B cell (primary cell): ENCODE measurements at regions of chr3 and their contacts with region 1.

Region 1: GRCh38 chr3:33645060-33645647 is 72.9 kb downstream of the CLASP2 start:
- DNase-seq: no peak
- ATAC-seq: no peak
- H3K4me3 ChIP-seq: no peak overlapping the region
- H3K4me3 Mint-ChIP-seq: no peak overlapping the region
- H3K27ac ChIP-seq: no peak overlapping the region
- H3K27ac Mint-ChIP-seq: no peak overlapping the region
- H3K4me1 ChIP-seq: no peaks in the 10 kb centered on the region
- H3K4me1 Mint-ChIP-seq: peaks cover 14% of the 10 kb centered on the region
- H3K27me3 ChIP-seq: no peaks in the 10 kb centered on the region
- H3K27me3 Mint-ChIP-seq: no peaks in the 10 kb centered on the region
- CTCF ChIP-seq: no peak

Region 2: DNA sequence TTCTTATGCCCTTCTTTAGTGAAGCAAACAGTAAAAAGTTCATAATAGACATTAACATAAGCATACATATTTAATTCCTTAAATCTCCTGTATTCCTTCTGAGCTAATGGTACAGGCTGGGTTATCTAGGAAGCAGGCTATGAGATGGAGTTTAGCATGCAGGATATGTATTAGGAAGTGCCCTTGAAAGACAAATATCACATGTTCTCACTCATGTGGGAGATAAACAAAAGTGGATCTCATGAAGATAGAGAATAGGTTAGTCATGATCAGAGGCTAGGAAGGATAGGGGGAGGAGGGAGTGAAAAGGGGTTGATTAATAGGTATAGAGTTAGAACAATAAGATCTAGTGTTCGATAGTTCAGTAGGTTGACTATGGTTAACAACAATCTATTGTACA is 32.5 kb before region 1 on chr3:
- CTCF ChIA-PET with region 1: no interaction called
- POLR2A ChIA-PET with region 1: no interaction called
- intact Hi-C with region 1: no loop called
- DNase-seq: no peak
- ATAC-seq: no peak
- H3K4me3 ChIP-seq: no peak overlapping the region
- H3K4me3 Mint-ChIP-seq: no peak overlapping the region
- H3K27ac ChIP-seq: no peak overlapping the region
- H3K27ac Mint-ChIP-seq: no peak overlapping the region
- H3K4me1 ChIP-seq: no peaks in the 10 kb centered on the region
- H3K4me1 Mint-ChIP-seq: no peaks in the 10 kb centered on the region
- H3K27me3 ChIP-seq: no peaks in the 10 kb centered on the region
- H3K27me3 Mint-ChIP-seq: no peaks in the 10 kb centered on the region
- CTCF ChIP-seq: no peak

Region 3: DNA sequence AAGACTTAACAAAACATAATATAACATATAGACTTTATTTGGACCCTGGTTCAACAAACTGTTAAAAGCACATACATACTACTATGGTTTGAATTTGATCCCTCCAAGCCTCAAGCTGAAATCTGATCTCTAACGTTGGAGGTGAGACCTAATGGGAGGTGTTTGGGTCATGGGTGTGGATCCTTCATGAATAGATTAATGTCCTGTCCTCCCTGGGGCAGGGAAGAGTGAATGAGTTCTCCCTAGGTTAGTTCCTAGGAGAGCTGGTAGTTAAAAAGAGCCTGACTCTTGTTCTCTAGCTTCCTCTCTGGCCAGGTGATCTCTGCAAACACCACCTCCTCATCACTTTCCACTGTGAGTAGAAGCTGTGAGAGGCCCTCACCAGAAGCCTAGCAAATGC is 36.5 kb after region 1 on chr3:
- CTCF ChIA-PET with region 1: no interaction called
- POLR2A ChIA-PET with region 1: no interaction called
- intact Hi-C with region 1: loop called (anchors 5 kb)
- DNase-seq: no peak
- ATAC-seq: no peak
- H3K4me3 ChIP-seq: no peak overlapping the region
- H3K4me3 Mint-ChIP-seq: no peak overlapping the region
- H3K27ac ChIP-seq: no peak overlapping the region
- H3K27ac Mint-ChIP-seq: no peak overlapping the region
- H3K4me1 ChIP-seq: no peaks in the 10 kb centered on the region
- H3K4me1 Mint-ChIP-seq: no peaks in the 10 kb centered on the region
- H3K27me3 ChIP-seq: no peaks in the 10 kb centered on the region
- H3K27me3 Mint-ChIP-seq: no peaks in the 10 kb centered on the region
- CTCF ChIP-seq: no peak